GM13976 (cell line): ENCODE measurements at regions of chr22 and their contacts with region 1.

Region 1: DNA sequence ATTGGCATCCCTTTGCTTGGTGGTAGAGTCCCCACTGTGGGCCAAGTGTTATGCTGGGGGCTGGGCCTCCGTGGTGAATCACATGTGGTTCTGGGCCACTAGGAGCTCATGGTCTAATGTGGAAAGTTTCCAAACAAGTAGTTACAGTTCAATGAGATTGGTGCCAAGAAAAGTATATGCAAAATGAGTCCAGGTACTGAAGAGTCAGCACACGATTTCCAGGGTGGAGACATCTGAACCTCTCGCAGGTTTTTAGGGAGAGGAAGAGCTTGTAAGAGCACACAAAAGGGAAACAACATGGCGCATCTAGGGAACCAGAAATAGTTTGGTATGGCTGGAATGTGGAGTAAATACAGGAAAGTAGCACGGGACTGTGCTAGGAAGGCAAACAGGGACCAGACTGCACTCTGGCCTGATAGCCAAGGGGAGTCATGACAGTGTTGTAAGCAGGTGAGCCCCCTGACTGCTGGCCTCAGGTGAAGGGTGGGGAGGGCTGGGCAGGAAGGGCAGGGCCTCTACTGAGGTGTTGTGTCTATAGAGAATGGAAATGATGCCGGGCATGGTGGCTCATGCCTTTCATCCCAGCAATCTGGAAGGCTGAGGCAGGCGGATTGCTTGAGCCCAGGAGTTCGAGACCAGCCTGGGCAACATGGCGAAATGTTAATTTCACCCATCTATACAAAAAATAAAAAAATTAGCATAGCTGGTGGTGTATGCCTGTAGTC is 12.6 kb downstream of the POLR2F start:
- DNase-seq: no peak
- CTCF ChIP-seq: no peak

Region 2: DNA sequence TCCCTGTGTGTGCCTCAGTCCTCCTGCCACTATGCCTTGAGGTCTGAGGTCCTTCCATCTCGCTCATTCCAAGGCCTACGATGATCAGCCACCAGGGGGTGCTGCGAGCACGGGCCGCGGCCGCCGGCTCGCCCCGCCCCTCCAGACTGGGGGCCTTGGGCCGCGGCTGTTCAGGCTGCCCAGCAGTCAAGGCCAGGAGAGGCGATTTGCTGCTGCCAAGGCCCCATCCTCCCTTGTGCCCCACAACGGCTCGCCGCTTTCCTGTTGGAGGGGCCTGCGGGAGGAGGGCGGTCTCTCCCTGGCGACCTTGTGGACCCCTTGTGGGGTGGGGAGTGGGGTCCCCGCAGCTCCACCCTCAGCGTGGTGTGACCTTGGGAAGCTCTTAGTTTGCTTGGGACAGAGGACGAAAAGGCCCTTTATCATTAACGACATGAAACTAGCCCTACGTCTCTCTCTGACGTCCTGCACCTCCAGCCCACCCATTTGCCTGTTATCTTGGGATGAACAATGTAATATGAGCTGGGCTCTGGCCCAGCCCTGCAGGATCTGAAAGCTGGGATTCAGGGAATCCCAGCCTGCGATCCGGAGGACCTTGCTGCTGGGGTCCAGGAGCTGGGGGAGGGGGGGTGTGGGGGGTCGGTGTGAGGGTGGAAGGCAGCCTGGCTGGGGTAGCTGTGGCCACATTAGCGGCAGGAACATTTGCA is 148.2 kb before region 1 on chr22:
- in situ Hi-C with region 1: loop called (anchors 10 kb)
- DNase-seq: peak; percentile 95
- CTCF ChIP-seq: peak; percentile 83

Region 3: DNA sequence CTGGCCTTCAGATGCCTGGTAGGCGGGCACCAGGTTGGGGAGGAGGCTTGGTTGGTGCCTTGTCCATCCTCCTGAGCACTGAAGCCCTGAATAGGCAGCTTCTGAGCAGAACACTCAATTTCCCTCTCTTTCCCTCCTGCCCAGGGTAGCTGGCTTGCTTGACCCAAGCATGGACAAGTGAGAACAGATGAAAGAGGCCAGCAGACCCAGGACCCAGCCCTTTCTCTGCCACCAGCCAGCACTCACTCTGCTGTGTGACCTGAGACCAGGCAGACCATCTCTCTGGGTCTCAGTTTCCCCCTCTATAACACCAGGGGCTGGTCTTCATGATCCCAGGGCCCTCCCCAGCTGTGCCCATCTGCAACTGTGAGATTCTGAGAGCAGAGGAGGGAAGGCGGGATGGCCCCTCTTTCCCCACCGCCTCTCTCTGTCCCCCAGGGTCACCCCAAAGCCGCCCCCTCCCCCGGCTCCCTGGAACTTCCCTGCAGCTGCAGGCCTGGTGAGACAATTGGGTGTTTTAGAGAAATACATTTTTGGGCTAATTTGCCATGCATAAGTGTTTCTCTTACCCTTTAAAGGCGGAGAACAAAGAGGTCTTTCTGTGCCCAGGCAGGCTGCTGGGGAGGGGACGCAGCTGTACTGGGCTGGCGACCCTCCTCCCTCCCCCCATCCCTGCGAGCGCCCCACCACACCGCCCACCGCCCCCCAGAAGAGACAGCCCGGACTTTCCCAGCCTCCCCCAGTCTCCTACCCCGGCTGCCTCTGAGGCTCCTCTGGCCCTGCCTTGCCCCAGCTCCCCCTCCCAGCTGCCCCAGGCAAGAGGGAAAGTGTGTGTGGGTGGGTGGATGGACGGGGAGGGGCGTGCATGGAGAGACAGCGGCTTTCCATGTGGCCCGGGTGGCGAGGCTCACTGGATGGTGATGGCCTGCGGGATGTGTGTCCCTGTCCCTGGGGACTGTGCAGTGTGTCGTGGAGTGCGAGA is 60.3 kb after region 1 on chr22:
- in situ Hi-C with region 1: loop called (anchors 10 kb)
- DNase-seq: no peak
- CTCF ChIP-seq: no peak

Region 4: GRCh38 chr22:38069372-38070249 is 103.5 kb after region 1 on chr22:
- in situ Hi-C with region 1: no loop called
- DNase-seq: no peak
- CTCF ChIP-seq: no peak